ENCODE measurements at regions of chr3 and their contacts with region 1.

Region 1: GRCh38 chr3:118408431-118408830 is 626.2 kb downstream of the IGSF11 start:
- DNase-seq: no peak
- H3K4me3 ChIP-seq: no peak overlapping the region
- H3K27ac ChIP-seq: no peak overlapping the region
- H3K4me1 ChIP-seq: no peaks in the 10 kb centered on the region
- CTCF ChIP-seq: no peak

Region 2: GRCh38 chr3:118207271-118207670 is 201.2 kb before region 1 on chr3:
- CTCF ChIA-PET with region 1: no interaction called
- POLR2A ChIA-PET with region 1: no interaction called
- intact Hi-C with region 1: no loop called
- DNase-seq: no peak
- H3K4me3 ChIP-seq: no peak overlapping the region
- H3K27ac ChIP-seq: no peak overlapping the region
- H3K4me1 ChIP-seq: no peaks in the 10 kb centered on the region
- CTCF ChIP-seq: no peak

Region 3: DNA sequence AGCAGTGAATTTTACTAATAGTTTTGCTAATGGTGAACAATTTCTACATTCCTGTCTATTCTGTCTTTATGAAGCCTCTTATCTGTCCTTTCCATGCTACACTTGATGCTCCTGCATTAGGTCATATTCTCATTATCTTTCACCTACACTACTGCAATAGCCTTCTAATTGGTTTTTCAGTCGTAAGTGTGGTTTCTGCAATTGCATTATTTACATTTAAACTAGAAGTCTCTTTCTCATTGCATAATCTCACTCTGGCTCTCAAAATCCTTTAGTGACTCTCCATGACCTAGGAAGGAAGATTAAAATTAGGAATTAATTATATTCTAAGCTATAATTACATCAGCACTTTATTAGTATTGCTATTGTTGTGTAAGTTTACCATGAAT is 60.3 kb before region 1 on chr3:
- CTCF ChIA-PET with region 1: no interaction called
- POLR2A ChIA-PET with region 1: no interaction called
- intact Hi-C with region 1: loop called (anchors 10 kb)
- DNase-seq: no peak
- H3K4me3 ChIP-seq: no peak overlapping the region
- H3K27ac ChIP-seq: no peak overlapping the region
- H3K4me1 ChIP-seq: no peaks in the 10 kb centered on the region
- CTCF ChIP-seq: no peak